Activated B cell treated with CpG ODN at 0.5 μM for 24 hours (primary cell): ENCODE measurements at regions of chr9 and their contacts with region 1.

Region 1: DNA sequence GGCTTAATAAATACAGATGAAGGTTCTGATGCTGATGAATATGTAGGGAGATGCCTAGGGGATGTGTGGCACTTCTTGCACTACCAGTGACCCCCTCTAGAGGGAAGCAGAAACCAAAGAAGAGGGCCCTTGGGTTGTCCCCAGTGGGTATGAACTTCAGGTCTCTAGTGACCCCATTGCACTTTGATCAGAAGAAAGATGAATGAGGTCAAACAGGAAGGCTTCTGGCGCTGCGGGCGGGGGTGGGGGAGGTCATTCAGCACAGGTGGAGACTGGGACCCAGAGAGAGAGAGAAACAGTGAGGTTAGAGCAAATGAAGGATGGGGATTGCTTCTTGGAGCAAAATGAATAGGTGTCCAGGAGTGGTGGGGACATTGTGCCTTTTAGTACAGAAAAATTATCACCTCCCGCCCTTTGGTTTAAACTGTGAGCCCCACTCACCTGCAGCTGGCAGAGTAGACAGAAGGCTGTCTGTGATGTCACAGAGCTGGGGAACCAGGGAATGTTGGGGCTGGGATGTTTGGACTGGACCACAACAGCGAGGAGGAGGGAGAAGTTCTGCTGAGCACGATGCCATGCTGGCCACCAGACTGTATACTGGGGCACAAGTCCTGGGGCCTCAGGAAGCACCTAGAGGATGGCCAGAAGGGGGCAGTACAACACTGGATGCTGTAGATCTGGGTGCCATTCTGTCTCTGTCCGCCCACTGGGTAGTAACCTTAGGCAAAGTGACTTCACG is at the start of gene TEX48:
- DNase-seq: no peak
- ATAC-seq: peak; percentile 94
- H3K4me3 Mint-ChIP-seq: no peak within 1 kb of the TSS
- H3K27ac Mint-ChIP-seq: peak within 1 kb of the TSS; percentile 36
- H3K4me1 Mint-ChIP-seq: peaks cover 5% of the 10 kb centered on the region
- H3K27me3 Mint-ChIP-seq: peaks cover 24% of the 10 kb centered on the region
- CTCF ChIP-seq: no peak
- total RNA-seq, gene TEX48: not detected in 2 replicates

Region 2: GRCh38 chr9:113427629-113428028 is 1254.1 kb before region 1 on chr9:
- CTCF ChIA-PET with region 1: no interaction called
- POLR2A ChIA-PET with region 1: no interaction called
- intact Hi-C with region 1: no loop called
- DNase-seq: no peak
- ATAC-seq: no peak
- H3K4me3 Mint-ChIP-seq: no peak overlapping the region
- H3K27ac Mint-ChIP-seq: no peak overlapping the region
- H3K4me1 Mint-ChIP-seq: no peaks in the 10 kb centered on the region
- H3K27me3 Mint-ChIP-seq: peaks cover 18% of the 10 kb centered on the region
- CTCF ChIP-seq: no peak

Region 3: GRCh38 chr9:114172981-114173833 is 508.6 kb before region 1 on chr9:
- CTCF ChIA-PET with region 1: no interaction called
- POLR2A ChIA-PET with region 1: no interaction called
- intact Hi-C with region 1: no loop called
- DNase-seq: no peak
- ATAC-seq: no peak
- H3K4me3 Mint-ChIP-seq: no peak overlapping the region
- H3K27ac Mint-ChIP-seq: no peak overlapping the region
- H3K4me1 Mint-ChIP-seq: no peaks in the 10 kb centered on the region
- H3K27me3 Mint-ChIP-seq: peaks cover 5% of the 10 kb centered on the region
- CTCF ChIP-seq: no peak

Region 4: GRCh38 chr9:115008536-115009270 is 326.9 kb after region 1 on chr9:
- CTCF ChIA-PET with region 1: interaction called, 22 read pairs
- POLR2A ChIA-PET with region 1: no interaction called
- intact Hi-C with region 1: no loop called
- DNase-seq: no peak
- ATAC-seq: no peak
- H3K4me3 Mint-ChIP-seq: no peak overlapping the region
- H3K27ac Mint-ChIP-seq: no peak overlapping the region
- H3K4me1 Mint-ChIP-seq: no peaks in the 10 kb centered on the region
- H3K27me3 Mint-ChIP-seq: peaks cover 5% of the 10 kb centered on the region
- CTCF ChIP-seq: no peak

Region 5: GRCh38 chr9:115524453-115525059 is 842.8 kb after region 1 on chr9:
- CTCF ChIA-PET with region 1: no interaction called
- POLR2A ChIA-PET with region 1: no interaction called
- intact Hi-C with region 1: loop called (anchors 1 kb)
- DNase-seq: no peak
- ATAC-seq: peak; percentile 34
- H3K4me3 Mint-ChIP-seq: no peak overlapping the region
- H3K27ac Mint-ChIP-seq: no peak overlapping the region
- H3K4me1 Mint-ChIP-seq: no peaks in the 10 kb centered on the region
- H3K27me3 Mint-ChIP-seq: peaks cover 5% of the 10 kb centered on the region
- CTCF ChIP-seq: no peak